Right ventricle myocardium inferior (tissue), 1 donor: ENCODE measurements at regions of chr7 and their contacts with region 1.

Region 1: DNA sequence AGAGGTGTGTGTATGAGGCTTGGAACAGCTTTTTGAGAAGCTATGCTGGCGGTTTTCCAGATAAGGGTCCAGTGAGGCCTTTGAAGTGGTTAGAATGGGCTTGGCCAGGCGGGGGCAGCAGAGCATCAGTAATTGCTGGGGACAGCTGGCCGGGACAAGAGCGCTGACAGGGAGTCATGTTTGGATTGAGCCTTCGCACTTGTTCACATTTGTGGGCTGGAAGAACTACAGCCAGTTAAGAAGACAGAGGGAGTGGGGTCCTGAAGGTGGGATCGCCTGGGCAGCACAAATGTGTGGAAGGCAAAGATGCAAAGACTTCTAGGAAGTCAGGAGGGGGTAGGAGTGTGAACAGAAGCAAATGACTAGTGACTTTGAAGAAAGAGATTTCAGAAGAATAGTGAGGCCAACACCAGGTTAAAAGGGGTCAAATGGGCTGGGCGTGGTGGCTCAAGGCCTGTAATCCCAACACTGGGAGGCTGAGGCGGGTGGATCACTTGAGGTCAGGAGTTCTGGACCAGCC is 12.7 kb upstream of the SDHAF3 start:
- DNase-seq: peak; percentile 90
- ATAC-seq: peak; percentile 95

Region 2: GRCh38 chr7:97179454-97180104 is 74.8 kb after region 1 on chr7:
- intact Hi-C with region 1: loop called (anchors 1 kb)
- DNase-seq: no peak
- ATAC-seq: peak; percentile 50